Endothelial cell of umbilical vein (primary cell): ENCODE measurements at regions of chr19 and their contacts with region 1.

Region 1: DNA sequence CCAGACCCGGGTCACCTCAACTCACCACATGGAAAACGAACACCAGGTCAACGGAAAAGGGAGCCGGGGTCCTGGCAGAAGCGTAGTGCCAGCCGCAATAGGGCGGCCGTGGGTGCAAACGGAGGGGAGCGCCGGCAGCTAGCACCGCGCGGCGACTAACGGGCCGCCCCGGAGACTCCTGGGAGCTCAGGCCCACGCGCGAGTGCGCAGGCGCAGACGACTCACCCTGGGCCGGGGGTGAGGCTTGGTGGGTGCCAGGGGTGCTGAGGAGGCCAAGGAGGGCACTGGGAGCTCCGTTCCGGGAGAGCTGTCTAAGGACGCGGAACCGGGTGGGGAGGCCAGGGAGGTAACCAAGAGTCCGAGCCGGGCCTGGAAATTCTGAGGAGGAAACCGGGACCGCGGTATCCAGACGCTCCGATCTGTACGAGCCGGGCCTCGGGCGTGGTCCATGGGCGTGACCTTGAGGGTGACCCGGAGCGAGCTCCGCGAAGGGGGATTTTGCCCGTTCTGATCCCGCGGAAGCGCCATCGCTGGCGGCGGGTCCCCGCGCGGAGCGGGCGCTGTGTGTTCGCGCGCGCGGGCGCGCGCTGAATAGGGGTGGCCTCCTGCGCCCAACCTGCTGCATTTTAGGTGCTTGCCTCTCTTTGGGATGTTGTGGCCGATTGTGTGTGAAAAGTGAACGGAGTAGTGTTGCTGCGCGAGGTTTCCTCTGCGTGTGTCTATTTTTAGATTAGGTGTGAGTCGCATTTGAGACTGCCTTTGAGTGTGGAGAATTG is at the start of gene ZNF382:
- DNase-seq: peak; percentile 60
- H3K4me3 ChIP-seq: peak within 1 kb of the TSS; percentile 56 to 82 (median 61)
- H3K27ac ChIP-seq: no peak within 1 kb of the TSS
- H3K4me1 ChIP-seq: no peaks in the 10 kb centered on the region
- H3K27me3 ChIP-seq: no peaks in the 10 kb centered on the region
- CTCF ChIP-seq: no peak
- POLR2A ChIP-seq: peak; percentile 25
- total RNA-seq, gene ZNF382: 4.2 and 4.3 TPM in 2 replicates

Region 2: DNA sequence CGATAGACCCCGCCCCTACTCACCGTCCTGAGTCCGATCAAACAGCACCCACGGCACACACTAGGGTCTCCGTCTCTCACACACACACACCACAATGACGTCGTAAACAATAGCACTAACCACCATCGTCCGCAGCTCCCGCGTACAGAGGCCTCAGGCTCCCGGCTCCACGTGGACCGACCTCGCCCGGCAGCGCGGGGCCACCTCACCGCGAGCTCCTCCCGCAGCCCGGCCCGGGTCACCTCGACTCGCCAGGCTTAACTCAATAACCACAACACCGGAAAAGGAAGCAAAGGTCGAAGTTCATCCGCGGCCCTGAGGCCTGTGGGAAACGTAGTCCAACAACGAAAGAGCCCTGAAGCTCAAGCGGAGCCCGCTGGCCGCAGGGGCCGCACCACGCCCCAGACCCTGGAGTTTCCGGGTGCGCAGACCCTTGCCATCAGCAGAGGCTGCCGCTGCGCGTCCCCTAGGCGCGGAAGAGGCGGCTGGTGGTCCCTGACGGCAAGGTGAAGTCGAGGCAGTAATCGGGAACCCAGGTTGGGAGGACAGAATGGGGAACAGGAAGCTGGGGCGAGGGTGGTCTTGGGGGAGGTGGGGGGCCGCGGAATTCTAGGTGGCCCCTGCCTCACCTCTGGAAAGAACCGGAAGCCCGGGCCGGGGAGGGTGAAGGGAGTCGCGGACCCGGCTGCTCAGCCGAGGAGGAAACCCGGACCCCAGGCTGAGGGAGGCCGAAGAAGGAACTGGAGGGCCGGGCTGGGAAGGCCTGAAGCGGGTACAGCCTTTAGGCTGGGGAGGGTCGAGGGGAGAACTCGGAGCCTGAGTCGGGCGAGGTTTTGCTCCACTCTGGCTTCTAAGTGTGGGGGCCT is 32.0 kb before region 1 on chr19 and contains the start of gene ZNF529:
- CTCF ChIA-PET with region 1: no interaction called
- POLR2A ChIA-PET with region 1: no interaction called
- dilution Hi-C with region 1: no loop called
- intact Hi-C with region 1: loop called (anchors 2 kb)
- DNase-seq: peak; percentile 94
- H3K4me3 ChIP-seq: peak within 1 kb of the TSS; percentile 3 to 78 (median 57)
- H3K27ac ChIP-seq: peak within 1 kb of the TSS; percentile 22
- H3K4me1 ChIP-seq: peaks cover 8% of the 10 kb centered on the region
- H3K27me3 ChIP-seq: no peaks in the 10 kb centered on the region
- CTCF ChIP-seq: no peak
- POLR2A ChIP-seq: peak; percentile 73
- total RNA-seq, gene ZNF529: 5.3 and 8.4 TPM in 2 replicates